ENCODE measurements at regions of chr22 and their contacts with region 1.

Region 1: GRCh38 chr22:36201630-36202319 is at the start of gene APOL4:
- H3K4me3 ChIP-seq: no peak within 1 kb of the TSS
- H3K27ac ChIP-seq: no peak within 1 kb of the TSS
- H3K4me1 ChIP-seq: no peaks in the 10 kb centered on the region
- CTCF ChIP-seq: no peak

Region 2: GRCh38 chr22:35947794-35948425 is 253.9 kb before region 1 on chr22:
- CTCF ChIA-PET with region 1: no interaction called
- POLR2A ChIA-PET with region 1: no interaction called
- H3K4me3 ChIP-seq: no peak overlapping the region
- H3K27ac ChIP-seq: no peak overlapping the region
- H3K4me1 ChIP-seq: no peaks in the 10 kb centered on the region
- CTCF ChIP-seq: no peak

Region 3: DNA sequence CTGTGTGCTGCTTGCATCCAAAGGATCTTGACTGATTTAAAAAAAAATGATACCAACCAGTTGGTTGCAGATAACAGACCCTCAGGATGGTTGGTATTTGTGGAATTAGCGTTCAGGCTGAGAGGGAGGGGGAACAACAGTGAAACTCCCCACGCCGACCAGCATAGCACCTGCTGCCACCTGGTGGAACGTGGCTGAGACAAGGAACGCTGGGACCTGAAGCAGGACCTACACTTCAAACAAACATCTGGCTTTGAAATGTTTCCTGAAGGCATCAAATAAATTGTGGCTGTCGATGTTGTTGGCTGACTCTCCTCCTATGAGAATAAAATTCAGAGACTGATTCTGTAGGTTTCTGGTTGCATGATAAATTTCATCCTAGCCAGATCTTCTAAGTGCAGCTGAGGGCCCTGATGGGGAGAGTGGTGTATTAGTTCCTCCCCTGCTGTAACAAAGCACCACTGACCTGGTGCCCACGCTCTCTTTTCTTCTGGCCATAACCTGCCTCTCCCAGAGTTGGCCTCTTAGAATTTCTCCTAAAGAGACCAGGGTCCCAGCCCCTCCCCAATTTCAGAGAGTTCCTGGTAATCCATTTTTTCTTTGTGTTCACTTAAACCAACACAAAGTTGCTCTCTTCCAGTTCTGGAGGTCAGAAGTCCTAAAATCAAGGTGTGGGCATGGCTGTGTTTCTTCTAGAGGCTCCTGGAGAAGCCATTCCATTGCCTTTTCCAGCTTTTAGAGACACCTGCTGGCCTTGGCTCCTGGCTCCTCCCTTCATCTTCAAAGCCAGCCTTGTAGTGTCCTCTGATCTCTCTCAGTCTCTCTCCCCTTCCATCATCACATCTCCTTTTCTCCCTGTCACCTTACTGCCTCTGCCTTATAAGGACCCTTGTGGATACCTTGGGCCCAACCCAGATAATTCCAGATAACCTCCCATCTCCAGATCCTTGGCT is 20.3 kb after region 1 on chr22:
- CTCF ChIA-PET with region 1: interaction called, 30 read pairs
- POLR2A ChIA-PET with region 1: no interaction called
- H3K4me3 ChIP-seq: no peak overlapping the region
- H3K27ac ChIP-seq: no peak overlapping the region
- H3K4me1 ChIP-seq: no peaks in the 10 kb centered on the region
- CTCF ChIP-seq: peak; percentile 82

Region 4: DNA sequence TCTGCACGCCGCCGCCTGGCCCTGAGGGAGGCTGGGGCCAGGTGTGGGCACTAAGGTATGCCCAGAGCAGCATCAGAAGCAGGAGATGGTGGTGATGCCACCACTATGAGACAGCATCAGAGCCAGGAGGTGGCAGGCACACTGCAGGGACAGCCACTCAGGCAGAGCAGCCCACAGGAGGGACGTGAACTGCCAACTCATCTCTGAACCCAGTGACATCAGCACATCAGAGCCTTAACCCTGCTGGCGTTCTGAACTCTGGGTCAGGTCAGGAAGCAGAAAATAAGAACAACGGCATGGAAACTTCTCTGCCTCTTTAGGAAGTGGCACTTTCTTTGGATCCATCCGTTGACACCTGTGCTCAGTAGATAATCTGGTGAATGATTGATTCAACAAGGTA is 588.9 kb after region 1 on chr22:
- CTCF ChIA-PET with region 1: no interaction called
- POLR2A ChIA-PET with region 1: no interaction called
- H3K4me3 ChIP-seq: no peak overlapping the region
- H3K27ac ChIP-seq: no peak overlapping the region
- H3K4me1 ChIP-seq: no peaks in the 10 kb centered on the region; the same call in 1 of the 2 replicates
- CTCF ChIP-seq: no peak

Measured in HEK293 (cell line).